ENCODE measurements at regions of chr4 and their contacts with region 1.

Region 1: DNA sequence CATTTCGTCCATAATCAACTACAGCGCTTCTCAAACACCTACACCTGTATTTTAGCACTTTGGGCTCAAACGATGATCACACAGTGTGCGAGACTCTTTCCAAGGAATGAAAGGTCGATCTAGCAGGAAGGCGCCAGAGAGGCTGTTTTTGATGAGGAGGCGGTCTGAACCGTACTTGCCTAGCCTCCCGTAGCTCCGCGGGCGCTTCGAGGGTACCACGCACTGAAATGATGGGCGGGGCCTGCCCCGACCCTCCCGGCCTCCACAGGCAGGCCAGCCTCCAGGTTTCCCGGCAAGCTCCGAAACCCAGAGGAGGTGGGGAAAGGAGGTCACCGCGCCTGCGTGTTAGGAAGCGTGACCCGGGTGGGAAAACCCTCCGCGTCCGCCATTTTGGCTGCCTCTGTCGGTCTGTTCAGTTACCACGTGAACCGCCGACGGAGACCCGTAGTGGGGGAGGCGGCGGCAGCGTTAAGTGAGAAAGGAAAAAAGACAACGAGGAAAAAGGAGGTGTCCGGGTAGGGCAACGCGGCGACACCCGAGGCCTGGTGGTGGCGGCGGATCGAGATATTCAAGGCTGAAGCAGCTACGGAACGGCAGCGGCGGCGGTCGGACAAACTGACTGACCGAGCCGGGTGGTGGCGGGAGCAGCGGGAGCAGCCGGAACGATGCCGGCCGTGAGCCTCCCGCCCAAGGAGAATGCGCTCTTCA is at the start of gene NAA15:
- DNase-seq: peak; percentile 98
- H3K4me3 Mint-ChIP-seq: peak within 1 kb of the TSS; percentile 100
- H3K27ac Mint-ChIP-seq: peak within 1 kb of the TSS; percentile 98
- H3K4me1 Mint-ChIP-seq: peaks cover 56% of the 10 kb centered on the region
- H3K27me3 Mint-ChIP-seq: no peaks in the 10 kb centered on the region
- total RNA-seq, gene NAA15: 91.5 to 94.0 TPM

Region 2: DNA sequence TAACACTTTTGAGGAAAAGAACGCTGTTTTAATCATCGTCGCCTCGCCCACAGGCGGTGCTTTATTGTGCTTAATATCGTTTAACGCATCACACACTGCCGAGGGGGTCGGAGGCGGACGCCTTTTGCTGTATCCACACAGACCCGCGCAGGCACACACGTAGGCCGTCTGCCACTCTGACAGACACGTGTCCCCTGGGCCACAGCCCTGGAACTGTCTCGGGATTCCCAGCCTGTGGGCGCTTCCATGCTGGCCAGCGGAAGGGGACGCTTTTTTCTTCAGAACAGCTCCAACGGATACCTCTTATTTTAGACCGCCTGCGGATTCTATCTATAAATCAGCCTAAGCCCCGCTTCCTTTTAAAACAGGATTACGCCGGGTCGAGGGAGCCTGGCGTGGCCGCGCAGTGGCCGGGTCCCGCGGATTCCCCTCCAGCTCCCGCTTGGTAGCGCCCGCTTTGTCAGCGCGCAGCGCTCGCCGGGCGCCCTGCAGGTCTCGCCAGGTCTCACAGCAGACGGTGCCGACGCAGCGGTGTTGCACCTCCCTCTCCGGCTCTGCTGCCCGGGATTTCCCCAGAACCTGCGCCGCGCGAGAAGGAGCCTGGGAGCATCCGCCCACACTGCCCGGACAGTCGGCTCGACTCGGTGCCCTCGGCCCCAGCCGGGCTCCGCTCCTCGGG is 285.9 kb before region 1 on chr4 and contains the start of gene NOCT:
- CTCF ChIA-PET with region 1: interaction called, 5 read pairs
- intact Hi-C with region 1: loop called (anchors 1 kb)
- DNase-seq: peak; percentile 97
- H3K4me3 Mint-ChIP-seq: peak within 1 kb of the TSS; percentile 91
- H3K27ac Mint-ChIP-seq: peak within 1 kb of the TSS; percentile 96
- H3K4me1 Mint-ChIP-seq: peaks cover 48% of the 10 kb centered on the region
- H3K27me3 Mint-ChIP-seq: no peaks in the 10 kb centered on the region
- total RNA-seq, gene NOCT: 9.3 to 10.4 TPM

Region 3: GRCh38 chr4:139333046-139333445 is 31.8 kb after region 1 on chr4:
- CTCF ChIA-PET with region 1: interaction called, 5 read pairs
- intact Hi-C with region 1: loop called (anchors 1 kb)
- DNase-seq: no peak
- H3K4me3 Mint-ChIP-seq: no peak overlapping the region
- H3K27ac Mint-ChIP-seq: peak overlapping the region; percentile 68
- H3K4me1 Mint-ChIP-seq: peaks cover 53% of the 10 kb centered on the region
- H3K27me3 Mint-ChIP-seq: no peaks in the 10 kb centered on the region

Region 4: GRCh38 chr4:139433716-139434115 is 132.4 kb after region 1 on chr4:
- CTCF ChIA-PET with region 1: no interaction called
- intact Hi-C with region 1: no loop called
- DNase-seq: no peak
- H3K4me3 Mint-ChIP-seq: no peak overlapping the region
- H3K27ac Mint-ChIP-seq: no peak overlapping the region
- H3K4me1 Mint-ChIP-seq: no peaks in the 10 kb centered on the region
- H3K27me3 Mint-ChIP-seq: no peaks in the 10 kb centered on the region

Region 5: DNA sequence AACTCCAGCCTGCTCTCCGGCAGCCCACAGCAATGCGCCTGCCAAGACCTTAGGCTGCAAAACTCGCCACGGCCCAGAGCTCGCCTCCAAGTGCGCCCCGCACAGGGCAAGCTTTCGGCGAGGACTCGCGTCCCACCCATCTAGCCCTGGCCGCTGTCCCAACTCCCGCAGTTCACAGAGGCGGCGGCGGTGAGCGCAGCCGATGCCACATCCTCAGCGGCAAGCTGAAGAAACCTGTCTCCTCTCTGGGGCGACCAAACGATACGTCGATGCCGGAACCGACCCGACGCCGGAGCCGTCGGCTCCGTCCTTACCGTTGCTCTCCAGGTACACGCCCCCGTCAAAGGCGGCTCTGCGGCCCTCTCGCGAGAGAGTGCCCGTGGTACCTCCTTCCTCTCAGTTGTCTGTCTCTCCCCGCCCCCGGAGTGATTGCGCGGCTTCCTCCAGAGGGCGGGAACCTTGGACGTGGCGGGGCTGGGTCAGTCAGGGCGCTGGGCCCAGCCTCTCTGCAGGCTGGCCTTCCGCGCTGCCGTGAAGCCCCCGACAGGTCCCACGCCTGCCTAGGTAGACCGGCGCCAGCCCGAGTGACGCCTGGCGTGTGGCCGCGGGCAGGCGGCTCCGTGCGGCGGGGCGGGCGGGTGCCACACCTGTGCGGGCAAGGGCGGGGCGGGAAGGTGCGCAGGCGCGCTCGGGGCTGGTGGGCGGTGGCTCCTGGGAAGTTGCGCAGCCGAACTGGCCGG is 152.3 kb after region 1 on chr4:
- CTCF ChIA-PET with region 1: no interaction called
- intact Hi-C with region 1: loop called (anchors 1 kb)
- DNase-seq: peak; percentile 98
- H3K4me3 Mint-ChIP-seq: peak overlapping the region; percentile 97
- H3K27ac Mint-ChIP-seq: peak overlapping the region; percentile 98
- H3K4me1 Mint-ChIP-seq: peaks cover 50% of the 10 kb centered on the region
- H3K27me3 Mint-ChIP-seq: no peaks in the 10 kb centered on the region

Region 6: GRCh38 chr4:139564502-139564901 is 263.2 kb after region 1 on chr4:
- CTCF ChIA-PET with region 1: no interaction called
- intact Hi-C with region 1: no loop called
- DNase-seq: peak; percentile 7
- H3K4me3 Mint-ChIP-seq: no peak overlapping the region
- H3K27ac Mint-ChIP-seq: no peak overlapping the region
- H3K4me1 Mint-ChIP-seq: peaks cover 10% of the 10 kb centered on the region
- H3K27me3 Mint-ChIP-seq: no peaks in the 10 kb centered on the region

Measured in activated naive CD4-positive, alpha-beta T cell treated with anti-CD3 and anti-CD28 coated beads for 36 hours (primary cell).